Psoas muscle (tissue), 8 donors: ENCODE measurements at regions of chr16 and their contacts with region 1.

Region 1: GRCh38 chr16:58000706-58001676 is at the start of gene USB1:
- DNase-seq: peak; percentile 88 to 93
- ATAC-seq: peak; percentile 91 to 95 (median 92)
- H3K4me3 ChIP-seq: peak within 1 kb of the TSS; percentile 90
- H3K27ac ChIP-seq: peak within 1 kb of the TSS; percentile 91
- H3K4me1 ChIP-seq: peaks cover 11% of the 10 kb centered on the region
- H3K27me3 ChIP-seq: no peaks in the 10 kb centered on the region
- CTCF ChIP-seq: peak; percentile 78
- total RNA-seq, gene USB1: 10.1 to 26.0 (median 17.8) TPM

Region 2: DNA sequence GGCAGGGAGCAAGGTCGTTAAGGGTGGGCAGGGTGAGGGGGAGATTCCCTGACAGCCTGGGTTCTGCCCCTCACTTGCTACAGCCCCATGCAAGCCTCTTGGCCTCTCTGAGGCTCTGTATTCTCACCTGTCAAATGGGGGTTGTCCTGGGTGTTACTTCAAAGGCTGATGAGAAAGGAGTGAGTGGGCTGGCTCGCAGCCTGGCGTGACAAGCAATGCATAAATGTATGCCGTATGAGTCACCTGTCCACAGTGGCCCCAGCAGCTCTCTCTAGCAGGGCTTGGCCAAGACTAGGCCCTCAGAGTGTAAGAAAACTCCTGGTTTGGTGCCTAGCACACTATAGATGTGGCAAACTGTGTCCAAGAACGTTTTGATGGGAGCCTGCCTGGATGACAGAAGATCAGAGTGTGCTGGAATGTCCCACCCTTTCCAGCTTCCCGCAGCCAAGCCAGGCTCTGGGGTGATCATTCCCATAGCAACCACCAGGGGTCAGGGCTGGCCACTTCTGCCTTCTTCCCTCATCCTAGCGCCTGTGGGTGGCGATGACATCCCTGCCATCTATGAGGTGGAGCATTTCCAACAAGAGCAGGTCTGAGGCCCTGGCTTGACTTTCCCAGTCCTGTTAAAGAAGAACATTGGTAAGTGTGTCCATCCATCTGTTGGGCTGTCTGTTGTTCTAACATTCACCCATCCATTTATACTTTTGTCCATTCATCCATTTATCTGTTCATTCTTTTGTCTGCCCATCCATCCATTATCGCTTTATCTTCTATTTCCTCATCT is 409.7 kb before region 1 on chr16:
- intact Hi-C with region 1: loop called in 1 of 2 experiments (anchors 5 kb)
- DNase-seq: peak; percentile 61 to 71
- ATAC-seq: peak; percentile 66 to 87 (median 85)
- H3K4me3 ChIP-seq: no peak overlapping the region
- H3K27ac ChIP-seq: no peak overlapping the region
- H3K4me1 ChIP-seq: no peaks in the 10 kb centered on the region
- H3K27me3 ChIP-seq: peaks cover 0 to 7% (median 0%) of the 10 kb centered on the region in 3 donors
- CTCF ChIP-seq: peak; percentile 79

Region 3: DNA sequence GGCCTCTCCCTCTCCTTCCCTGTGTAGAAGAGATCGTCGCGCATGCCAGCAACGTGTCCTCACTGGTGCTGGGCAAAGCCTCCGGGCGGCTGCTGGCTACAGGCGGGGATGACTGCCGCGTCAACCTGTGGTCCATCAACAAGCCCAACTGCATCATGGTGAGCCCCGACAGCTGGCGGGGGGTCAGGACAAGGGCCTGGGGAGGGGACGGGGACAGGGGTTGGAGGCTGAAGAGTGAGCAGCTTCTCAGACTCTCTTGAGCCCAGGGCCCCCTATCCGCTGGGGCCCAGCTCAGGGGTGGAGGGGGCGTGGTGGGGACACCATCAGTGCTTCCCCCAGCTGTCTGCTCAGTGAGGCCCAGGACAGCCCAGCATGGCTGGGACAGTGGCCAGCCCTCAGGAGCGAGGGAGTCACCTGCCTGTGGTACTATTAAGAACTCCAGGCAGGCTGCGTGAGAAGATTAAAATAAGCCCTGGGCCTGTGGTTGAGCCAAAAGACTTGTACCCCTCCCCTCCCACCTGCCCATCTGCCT is 259.3 kb before region 1 on chr16:
- intact Hi-C with region 1: no loop called
- DNase-seq: peak in 1 of 2 donors; percentile 30
- ATAC-seq: peak in 3 of 4 donors; percentile 42 to 72 (median 44)
- H3K4me3 ChIP-seq: no peak overlapping the region
- H3K27ac ChIP-seq: no peak overlapping the region
- H3K4me1 ChIP-seq: no peaks in the 10 kb centered on the region
- H3K27me3 ChIP-seq: no peaks in the 10 kb centered on the region
- CTCF ChIP-seq: no peak

Region 4: DNA sequence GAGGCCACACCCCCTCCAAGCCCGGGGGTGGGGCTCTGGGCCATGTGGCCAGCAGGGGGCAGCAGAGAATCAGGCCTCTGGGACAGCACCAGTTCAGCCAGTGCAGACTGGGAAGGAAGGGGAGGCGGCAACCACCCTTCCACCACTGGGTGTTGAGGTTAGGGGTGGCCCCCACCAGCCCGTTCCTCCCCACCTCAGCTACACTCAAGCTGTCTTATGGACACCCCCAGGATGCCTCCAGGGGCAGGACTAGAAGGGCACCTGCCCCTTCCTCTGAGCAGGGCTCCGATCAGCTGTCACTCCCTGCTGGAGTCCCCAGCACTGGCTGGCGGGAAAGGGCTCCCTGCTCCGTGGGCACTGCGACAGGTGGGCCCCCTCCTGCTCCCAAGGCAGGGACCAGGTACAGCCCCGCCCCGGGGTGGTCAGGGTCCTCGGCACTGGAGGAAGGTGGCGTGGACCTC is 243.6 kb before region 1 on chr16:
- intact Hi-C with region 1: loop called (anchors 5 to 10 kb)
- DNase-seq: peak; percentile 87 to 93
- ATAC-seq: peak; percentile 88 to 96 (median 92)
- H3K4me3 ChIP-seq: no peak overlapping the region
- H3K27ac ChIP-seq: no peak overlapping the region
- H3K4me1 ChIP-seq: peaks cover 5% of the 10 kb centered on the region
- H3K27me3 ChIP-seq: no peaks in the 10 kb centered on the region
- CTCF ChIP-seq: peak; percentile 98

Region 5: DNA sequence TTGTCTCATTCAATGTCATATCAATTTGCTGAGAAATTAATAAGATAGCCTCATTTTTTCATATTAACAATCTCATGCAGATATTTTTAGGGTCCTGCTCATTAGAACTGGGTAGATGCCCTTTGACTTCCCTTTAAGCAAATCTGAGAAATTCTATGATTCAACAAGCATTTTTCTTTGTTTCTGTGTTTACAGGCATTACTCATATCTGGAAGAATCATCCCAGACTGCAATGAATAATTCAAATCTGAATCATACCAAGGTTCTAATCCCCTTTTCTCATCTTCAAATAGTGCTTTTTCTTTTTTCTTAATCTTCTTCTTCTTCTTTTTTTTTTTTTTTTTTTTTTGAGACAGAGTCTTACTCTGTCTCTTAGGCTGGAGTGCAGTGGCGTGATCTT is 129.5 kb before region 1 on chr16:
- intact Hi-C with region 1: no loop called
- DNase-seq: no peak
- ATAC-seq: no peak
- H3K4me3 ChIP-seq: no peak overlapping the region
- H3K27ac ChIP-seq: no peak overlapping the region
- H3K4me1 ChIP-seq: no peaks in the 10 kb centered on the region
- H3K27me3 ChIP-seq: peaks cover 0 to 3% (median 3%) of the 10 kb centered on the region in 3 donors
- CTCF ChIP-seq: no peak

Region 6: GRCh38 chr16:57899771-57900661 is 101.0 kb before region 1 on chr16:
- intact Hi-C with region 1: loop called (anchors 1 to 2 kb)
- DNase-seq: peak; percentile 66 to 76
- ATAC-seq: peak in 3 of 4 donors; percentile 72 to 80 (median 76)
- H3K4me3 ChIP-seq: no peak overlapping the region
- H3K27ac ChIP-seq: no peak overlapping the region
- H3K4me1 ChIP-seq: no peaks in the 10 kb centered on the region
- H3K27me3 ChIP-seq: peaks cover 0 to 29% (median 0%) of the 10 kb centered on the region in 3 donors
- CTCF ChIP-seq: peak; percentile 87

Region 7: DNA sequence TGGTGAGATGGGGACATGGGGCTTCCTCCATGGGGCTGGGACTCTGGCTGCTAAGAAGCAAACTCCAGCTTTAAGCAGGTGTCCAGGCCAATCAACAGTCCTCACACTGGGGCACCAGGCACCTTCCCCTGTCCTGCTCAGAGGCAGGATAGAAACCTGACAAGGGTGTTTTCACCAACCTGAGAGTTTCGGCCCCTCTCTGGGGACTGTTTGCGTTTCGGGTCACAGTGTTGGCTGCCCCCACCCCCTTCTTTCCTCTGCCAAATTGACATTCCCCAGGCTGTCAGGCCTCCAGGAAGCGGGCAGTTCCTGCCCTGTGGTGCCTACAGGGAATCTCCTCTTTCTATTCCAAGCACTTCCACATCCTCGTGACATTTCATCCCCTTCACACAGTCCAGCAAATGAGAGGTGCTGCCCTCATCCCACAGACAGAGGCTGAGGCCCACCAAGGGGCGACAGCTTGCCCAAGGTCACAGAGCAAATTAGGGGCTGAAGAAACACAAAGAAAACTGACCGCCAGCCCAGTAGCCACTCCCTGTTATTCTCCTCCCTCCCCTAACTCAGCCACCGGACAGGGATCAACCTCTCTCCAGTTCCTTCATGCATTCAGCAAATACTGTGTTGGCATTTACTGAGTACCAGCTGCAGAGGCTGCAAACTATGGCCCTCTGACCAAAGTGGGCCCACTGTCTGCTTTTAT is 62.5 kb after region 1 on chr16:
- intact Hi-C with region 1: no loop called
- DNase-seq: no peak
- ATAC-seq: no peak
- H3K4me3 ChIP-seq: no peak overlapping the region
- H3K27ac ChIP-seq: no peak overlapping the region
- H3K4me1 ChIP-seq: no peaks in the 10 kb centered on the region
- H3K27me3 ChIP-seq: no peaks in the 10 kb centered on the region
- CTCF ChIP-seq: no peak

Region 8: GRCh38 chr16:58365623-58366022 is 364.6 kb after region 1 on chr16:
- intact Hi-C with region 1: no loop called
- DNase-seq: no peak
- ATAC-seq: no peak
- H3K4me3 ChIP-seq: no peak overlapping the region
- H3K27ac ChIP-seq: no peak overlapping the region
- H3K4me1 ChIP-seq: no peaks in the 10 kb centered on the region
- H3K27me3 ChIP-seq: peaks cover 0 to 3% (median 0%) of the 10 kb centered on the region in 3 donors
- CTCF ChIP-seq: no peak